Prostate gland (tissue), 2 donors: ENCODE measurements at regions of chr1 and their contacts with region 1.

Region 1: DNA sequence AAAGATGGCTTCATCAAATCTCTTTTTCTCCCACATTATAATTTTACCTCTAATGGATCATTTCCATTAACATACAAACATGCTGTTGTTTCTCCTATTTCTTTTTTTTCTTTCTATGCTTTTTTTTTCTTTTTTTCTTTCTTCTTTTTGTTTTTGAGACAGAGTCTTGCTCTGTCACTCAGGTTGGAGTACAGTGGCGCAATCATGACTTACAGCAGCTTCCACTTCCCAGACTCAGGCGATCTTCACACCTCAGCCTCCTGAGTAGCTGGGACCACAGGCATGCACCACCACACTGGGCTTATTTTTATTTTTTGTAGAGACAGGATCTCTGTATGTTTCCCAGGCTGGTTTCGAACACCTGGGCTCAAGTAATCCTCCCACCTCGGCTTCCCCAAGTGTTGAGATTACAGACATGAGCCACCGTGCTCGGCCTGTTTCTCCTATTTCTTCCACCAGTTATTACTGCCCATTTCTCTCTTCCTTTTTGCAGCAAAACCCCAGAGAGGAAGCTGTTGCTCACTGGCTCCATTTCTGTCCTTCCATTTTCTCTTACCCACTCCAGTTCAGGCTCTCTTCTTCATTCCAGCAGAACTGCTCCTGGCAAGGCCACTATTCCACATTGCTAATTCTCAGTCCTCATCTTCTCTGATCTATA is 32.1 kb upstream of the OPRD1 start:
- DNase-seq: no peak
- H3K4me3 ChIP-seq: no peak overlapping the region
- H3K27ac ChIP-seq: no peak overlapping the region
- H3K4me1 ChIP-seq: peaks cover 2% of the 10 kb centered on the region
- H3K27me3 ChIP-seq: no peaks in the 10 kb centered on the region
- CTCF ChIP-seq: no peak
- POLR2A ChIP-seq: no peak

Region 2: GRCh38 chr1:28581536-28582247 is 198.2 kb before region 1 on chr1:
- intact Hi-C with region 1: no loop called
- DNase-seq: peak; percentile 96
- H3K4me3 ChIP-seq: peak overlapping the region; percentile 75 to 83
- H3K27ac ChIP-seq: peak overlapping the region; percentile 84
- H3K4me1 ChIP-seq: peaks cover 3% of the 10 kb centered on the region
- H3K27me3 ChIP-seq: no peaks in the 10 kb centered on the region
- CTCF ChIP-seq: peak in 2 of 4 experiments; percentile 54 to 63
- POLR2A ChIP-seq: peak; percentile 85

Region 3: GRCh38 chr1:28877132-28877781 is 97.4 kb after region 1 on chr1:
- intact Hi-C with region 1: loop called (anchors 2 kb)
- DNase-seq: peak; percentile 72
- H3K4me3 ChIP-seq: no peak overlapping the region
- H3K27ac ChIP-seq: no peak overlapping the region
- H3K4me1 ChIP-seq: no peaks in the 10 kb centered on the region
- H3K27me3 ChIP-seq: no peaks in the 10 kb centered on the region
- CTCF ChIP-seq: peak; percentile 74 to 93 (median 89)
- POLR2A ChIP-seq: no peak

Region 4: GRCh38 chr1:28898405-28898881 is 118.6 kb after region 1 on chr1:
- intact Hi-C with region 1: no loop called
- DNase-seq: no peak
- H3K4me3 ChIP-seq: no peak overlapping the region
- H3K27ac ChIP-seq: no peak overlapping the region
- H3K4me1 ChIP-seq: no peaks in the 10 kb centered on the region
- H3K27me3 ChIP-seq: no peaks in the 10 kb centered on the region
- CTCF ChIP-seq: no peak
- POLR2A ChIP-seq: no peak

Region 5: GRCh38 chr1:29033829-29034466 is 254.1 kb after region 1 on chr1:
- intact Hi-C with region 1: loop called (anchors 10 kb)
- DNase-seq: no peak
- H3K4me3 ChIP-seq: no peak overlapping the region
- H3K27ac ChIP-seq: no peak overlapping the region
- H3K4me1 ChIP-seq: no peaks in the 10 kb centered on the region
- H3K27me3 ChIP-seq: no peaks in the 10 kb centered on the region
- CTCF ChIP-seq: peak; percentile 18 to 87 (median 77)
- POLR2A ChIP-seq: no peak

Region 6: DNA sequence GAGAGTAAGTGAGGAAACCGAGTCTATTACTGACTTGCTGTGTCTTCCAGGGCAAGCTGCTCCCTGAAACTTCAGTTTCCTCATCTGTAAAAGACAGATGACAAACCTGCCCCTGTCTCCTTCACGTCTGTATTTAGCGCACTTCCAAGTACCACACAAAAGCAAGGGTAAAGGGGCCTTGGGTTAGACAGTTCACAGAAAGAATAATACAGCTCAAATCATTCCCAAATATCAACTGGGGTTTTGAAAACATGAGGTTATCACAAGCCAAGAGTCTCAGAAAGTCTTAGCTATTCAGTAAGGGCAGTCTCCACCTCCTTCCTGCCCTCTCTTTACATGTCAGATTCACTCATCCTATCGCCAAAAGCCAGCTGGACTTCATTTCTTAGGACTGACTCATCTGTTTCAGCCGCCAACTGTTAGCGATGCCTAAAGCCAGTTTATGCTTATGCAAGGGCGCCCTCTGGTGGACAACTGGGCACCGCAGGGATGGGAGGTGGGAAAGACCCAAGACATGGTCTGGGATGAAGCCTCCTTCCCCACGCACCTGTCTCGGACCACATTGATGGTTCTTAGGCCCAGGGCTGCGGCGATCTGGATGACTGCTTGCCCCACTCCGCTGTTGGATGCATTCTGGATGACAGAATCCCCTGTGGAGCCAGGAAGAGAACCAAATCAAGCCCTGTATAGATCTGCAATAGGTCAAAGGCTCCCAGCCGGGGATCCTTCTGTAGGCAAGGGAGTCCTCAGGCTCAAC is 422.9 kb after region 1 on chr1:
- intact Hi-C with region 1: loop called (anchors 5 kb)
- DNase-seq: peak; percentile 97
- H3K4me3 ChIP-seq: no peak overlapping the region
- H3K27ac ChIP-seq: peak overlapping the region; percentile 55 to 75
- H3K4me1 ChIP-seq: no peaks in the 10 kb centered on the region
- H3K27me3 ChIP-seq: no peaks in the 10 kb centered on the region
- CTCF ChIP-seq: peak; percentile 96 to 98 (median 98)
- POLR2A ChIP-seq: no peak